ENCODE measurements at regions of chr2 and their contacts with region 1.

Region 1: DNA sequence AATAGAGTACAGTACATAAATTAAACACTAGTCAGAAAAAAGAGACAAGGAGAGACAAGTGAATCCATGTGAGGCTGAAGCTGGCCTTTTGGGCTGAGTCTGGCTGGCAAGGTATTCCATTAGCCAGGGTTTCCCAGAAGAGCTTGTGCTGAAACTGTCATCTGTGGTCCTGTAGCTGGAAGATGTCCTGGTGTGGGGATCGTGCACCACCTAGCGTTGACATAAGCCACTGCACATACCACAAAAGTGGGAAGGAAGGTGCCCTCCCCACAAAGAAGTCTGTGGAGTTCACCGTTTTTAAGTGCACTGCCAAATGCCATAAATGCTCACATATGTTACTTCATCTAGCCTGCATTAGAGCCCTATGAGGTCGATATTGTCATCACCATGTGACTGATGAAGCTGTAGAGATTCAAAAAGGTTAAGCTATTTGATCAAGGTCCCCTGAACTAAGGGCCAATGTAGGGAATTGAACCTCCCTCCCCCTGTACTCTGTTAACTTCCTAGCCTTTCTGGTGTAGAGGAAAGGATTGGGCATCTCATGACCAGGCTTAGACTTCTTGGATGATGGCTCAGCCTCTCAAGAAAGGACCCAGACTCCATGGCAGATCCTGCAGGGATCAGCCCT is 31.9 kb upstream of the GALNT14 start:
- DNase-seq: peak; percentile 87
- H3K4me3 ChIP-seq: no peak overlapping the region; a peak in 1 of 4 replicates
- H3K27ac ChIP-seq: no peak overlapping the region
- H3K4me1 ChIP-seq: peaks cover 0 to 11% of the 10 kb centered on the region in 2 experiments; a peak in 1 of 4 replicates
- H3K27me3 ChIP-seq: no peaks in the 10 kb centered on the region
- CTCF ChIP-seq: peak; percentile 97
- EP300 ChIP-seq: no peak
- RAD21 ChIP-seq: peak; percentile 100

Region 2: DNA sequence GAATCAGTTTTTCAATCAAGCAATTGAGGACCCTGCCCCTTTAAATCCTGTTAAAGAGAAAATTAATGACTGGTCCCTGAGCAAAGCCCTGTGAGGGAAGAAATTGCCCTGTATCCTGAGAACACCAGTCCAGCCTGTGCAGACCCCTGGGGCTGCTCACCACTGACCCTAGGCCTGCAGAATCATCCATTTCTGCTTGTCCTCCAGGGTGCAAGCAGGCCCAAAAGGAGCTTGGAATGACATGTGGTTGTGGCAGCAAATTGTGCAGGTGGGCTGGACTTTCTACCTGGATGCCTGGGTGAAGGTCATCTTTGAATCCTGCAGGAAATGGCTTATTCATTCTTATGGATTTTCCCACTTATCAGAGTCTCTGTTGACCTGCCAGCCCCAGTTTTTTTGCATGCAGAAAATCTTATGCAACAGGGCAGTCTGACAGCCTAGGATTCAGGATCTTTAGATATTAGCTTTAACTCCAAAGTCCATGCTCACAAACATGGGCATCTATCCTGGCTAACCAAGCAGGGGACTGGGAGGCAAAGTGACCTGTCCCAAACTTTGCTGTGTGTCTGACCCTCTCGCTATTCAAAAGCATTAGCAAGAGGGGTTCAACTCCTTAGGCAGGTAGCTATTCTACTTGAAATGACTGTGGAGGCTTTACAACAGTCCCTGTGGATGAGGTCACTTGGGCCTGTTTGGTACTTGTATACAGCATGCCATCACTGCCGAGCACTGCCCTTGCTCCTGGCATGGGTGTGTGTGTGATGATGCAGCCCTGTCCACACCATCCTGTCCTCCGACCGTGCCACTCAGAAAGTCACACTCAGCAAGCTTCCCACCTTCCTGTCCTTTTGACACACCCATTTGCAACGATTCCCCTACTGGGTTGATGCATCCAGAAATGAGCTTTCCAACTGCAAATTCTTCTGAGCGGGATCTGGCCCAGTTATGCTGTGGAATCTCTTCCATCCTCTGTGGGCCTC is 448.2 kb before region 1 on chr2:
- CTCF ChIA-PET with region 1: interaction called, 535 read pairs
- POLR2A ChIA-PET with region 1: no interaction called
- DNase-seq: no peak
- H3K4me3 ChIP-seq: no peak overlapping the region
- H3K27ac ChIP-seq: no peak overlapping the region
- H3K4me1 ChIP-seq: no peaks in the 10 kb centered on the region; a peak in 1 of 4 replicates
- H3K27me3 ChIP-seq: peaks cover 18% of the 10 kb centered on the region; the same call in 1 of the 2 replicates
- CTCF ChIP-seq: no peak
- EP300 ChIP-seq: no peak
- RAD21 ChIP-seq: no peak

Region 3: DNA sequence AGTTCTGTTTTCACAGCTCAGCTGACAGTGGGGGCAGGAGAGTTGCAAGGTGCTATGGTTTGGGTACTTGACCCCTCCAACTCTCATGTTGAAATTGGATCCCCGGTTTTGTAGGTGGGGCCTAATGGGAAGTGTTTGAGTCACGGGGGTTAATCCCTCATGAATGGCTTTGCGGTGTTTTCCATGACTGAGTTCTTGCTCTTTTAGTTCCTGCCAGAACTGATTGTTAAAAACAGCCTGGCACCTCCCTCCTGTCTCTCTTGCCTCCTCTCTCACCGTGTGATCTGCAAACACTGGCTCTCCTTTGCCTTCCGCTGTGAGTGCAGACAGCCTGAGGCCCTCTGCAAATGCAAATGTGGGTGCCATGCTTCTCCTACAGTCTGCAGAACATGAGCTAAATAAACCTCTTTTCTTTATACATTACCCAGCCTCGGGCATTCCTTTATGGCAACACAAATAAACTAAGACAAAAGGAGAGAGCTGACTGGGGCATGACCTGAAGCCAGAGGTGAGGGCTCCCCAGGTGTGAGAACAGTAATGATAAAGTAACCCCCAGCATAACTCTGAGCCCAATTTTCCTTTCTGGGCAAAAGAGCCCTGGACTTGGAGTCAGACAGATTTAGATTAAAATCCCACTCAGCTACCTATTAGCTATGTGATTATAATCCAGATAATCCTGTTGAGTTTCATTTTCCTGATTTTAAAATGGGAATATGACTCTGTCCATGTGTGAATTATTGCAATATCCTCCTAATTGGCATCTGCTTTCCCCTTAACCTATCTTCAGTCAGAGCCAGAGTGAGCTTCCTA is 298.0 kb before region 1 on chr2:
- CTCF ChIA-PET with region 1: interaction called, 172 read pairs
- POLR2A ChIA-PET with region 1: no interaction called
- DNase-seq: no peak
- H3K4me3 ChIP-seq: no peak overlapping the region
- H3K27ac ChIP-seq: peak overlapping the region in 1 of 2 experiments; percentile 99; a peak in 2 of 4 replicates
- H3K4me1 ChIP-seq: peaks cover 0 to 32% of the 10 kb centered on the region in 2 experiments; a peak in 2 of 4 replicates
- H3K27me3 ChIP-seq: no peaks in the 10 kb centered on the region
- CTCF ChIP-seq: no peak
- EP300 ChIP-seq: peak in 1 of 2 experiments; percentile 46; a peak in 1 of 4 replicates
- RAD21 ChIP-seq: no peak; the same call in 1 of the 2 replicates

Region 4: DNA sequence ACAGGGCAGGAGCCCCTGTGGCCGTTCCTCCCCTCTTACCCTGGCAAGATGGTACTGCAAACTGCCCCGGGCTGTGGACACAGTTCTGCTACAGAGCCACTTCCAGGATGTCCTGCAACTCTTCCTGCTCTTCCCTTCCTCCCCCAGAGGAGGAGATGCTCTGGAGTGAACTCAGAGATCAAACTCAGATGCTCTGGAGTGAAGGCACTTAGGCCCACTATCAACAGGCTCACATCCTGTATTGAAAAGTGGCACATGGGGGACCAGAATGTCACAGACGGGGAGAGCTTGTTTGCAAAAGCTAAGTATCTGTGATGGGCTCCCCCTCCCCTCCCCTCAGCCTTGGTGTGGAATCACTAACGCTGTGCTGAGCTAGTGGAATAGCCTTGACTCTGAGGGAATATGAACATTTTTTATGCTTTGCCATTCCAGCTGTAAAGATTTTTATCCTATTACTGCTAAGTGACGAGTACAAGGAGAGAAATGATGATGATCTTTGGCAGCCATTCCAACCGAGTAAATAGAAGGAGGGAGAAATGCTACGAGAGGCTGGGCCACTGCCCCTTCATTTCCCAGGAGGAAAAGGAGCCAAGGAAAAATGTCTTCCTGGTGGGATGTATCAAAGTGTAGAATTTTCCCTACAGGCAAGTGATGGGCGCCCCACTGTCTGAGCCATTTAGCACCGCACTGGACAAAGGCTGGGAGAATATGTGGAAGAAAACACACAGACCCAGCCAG is 184.5 kb before region 1 on chr2:
- CTCF ChIA-PET with region 1: interaction called, 13 read pairs
- POLR2A ChIA-PET with region 1: no interaction called
- DNase-seq: peak; percentile 75
- H3K4me3 ChIP-seq: no peak overlapping the region
- H3K27ac ChIP-seq: peak overlapping the region in 1 of 2 experiments; percentile 96; a peak in 2 of 4 replicates
- H3K4me1 ChIP-seq: peaks cover 0 to 80% of the 10 kb centered on the region in 2 experiments; a peak in 2 of 4 replicates
- H3K27me3 ChIP-seq: no peaks in the 10 kb centered on the region
- CTCF ChIP-seq: no peak
- EP300 ChIP-seq: no peak
- RAD21 ChIP-seq: 0 out of 2 replicates have a peak, but pooled peaks have one; percentile 15

Region 5: GRCh38 chr2:31083234-31083993 is 86.8 kb before region 1 on chr2:
- CTCF ChIA-PET with region 1: interaction called, 12 read pairs
- POLR2A ChIA-PET with region 1: no interaction called
- DNase-seq: no peak
- H3K4me3 ChIP-seq: no peak overlapping the region
- H3K27ac ChIP-seq: no peak overlapping the region
- H3K4me1 ChIP-seq: peaks cover 0 to 4% of the 10 kb centered on the region in 2 experiments; a peak in 1 of 4 replicates
- H3K27me3 ChIP-seq: no peaks in the 10 kb centered on the region
- CTCF ChIP-seq: no peak
- EP300 ChIP-seq: no peak
- RAD21 ChIP-seq: no peak

Region 6: GRCh38 chr2:31192851-31193392 is 22.7 kb after region 1 on chr2:
- CTCF ChIA-PET with region 1: interaction called, 14 read pairs
- POLR2A ChIA-PET with region 1: no interaction called
- DNase-seq: no peak
- H3K4me3 ChIP-seq: no peak overlapping the region
- H3K27ac ChIP-seq: no peak overlapping the region
- H3K4me1 ChIP-seq: no peaks in the 10 kb centered on the region; a peak in 1 of 4 replicates
- H3K27me3 ChIP-seq: peaks cover under 1% of the 10 kb centered on the region; the same call in 1 of the 2 replicates
- CTCF ChIP-seq: no peak; the same call in 1 of the 2 replicates
- EP300 ChIP-seq: no peak
- RAD21 ChIP-seq: no peak

Region 7: GRCh38 chr2:31333527-31334183 is 163.5 kb after region 1 on chr2:
- CTCF ChIA-PET with region 1: interaction called, 214 read pairs
- POLR2A ChIA-PET with region 1: no interaction called
- DNase-seq: peak; percentile 82
- H3K4me3 ChIP-seq: no peak overlapping the region; a peak in 1 of 4 replicates
- H3K27ac ChIP-seq: peak overlapping the region in 1 of 2 experiments; percentile 43; a peak in 2 of 4 replicates
- H3K4me1 ChIP-seq: peaks cover 25 to 42% of the 10 kb centered on the region in 2 experiments; a peak in 3 of 4 replicates
- H3K27me3 ChIP-seq: no peaks in the 10 kb centered on the region
- CTCF ChIP-seq: peak; percentile 100
- EP300 ChIP-seq: peak in 1 of 2 experiments; percentile 50; a peak in 2 of 4 replicates
- RAD21 ChIP-seq: peak; percentile 100

Measured in SK-N-SH (cell line).